Endothelial cell of umbilical vein (primary cell): ENCODE measurements at regions of chrX and their contacts with region 1.

Region 1: GRCh38 chrX:56618323-56618722 is 54.9 kb downstream of the UBQLN2 start:
- DNase-seq: no peak
- H3K4me3 ChIP-seq: no peak overlapping the region
- H3K27ac ChIP-seq: no peak overlapping the region
- H3K4me1 ChIP-seq: no peaks in the 10 kb centered on the region
- H3K27me3 ChIP-seq: no peaks in the 10 kb centered on the region
- CTCF ChIP-seq: no peak
- POLR2A ChIP-seq: no peak

Region 2: DNA sequence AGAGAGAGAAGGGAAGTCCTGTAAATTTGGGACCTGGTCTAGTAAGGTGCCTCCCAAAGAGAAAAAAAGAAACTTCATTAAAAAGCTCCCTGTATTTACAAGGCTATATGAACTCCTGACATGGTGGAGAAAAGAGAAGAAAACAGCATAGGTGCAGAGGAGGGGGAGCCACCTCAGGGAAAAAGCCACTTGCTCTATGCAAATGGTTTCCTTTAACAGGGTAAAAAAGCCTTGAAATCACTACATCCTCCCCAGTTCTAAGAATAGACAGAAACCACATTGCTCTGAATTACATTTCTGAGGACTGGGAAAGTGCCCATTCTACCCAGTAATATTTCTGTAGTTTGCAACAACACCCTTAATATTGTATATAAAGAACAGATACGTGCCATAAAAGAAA is 220.7 kb before region 1 on chrX:
- CTCF ChIA-PET with region 1: no interaction called
- POLR2A ChIA-PET with region 1: no interaction called
- dilution Hi-C with region 1: no loop called
- intact Hi-C with region 1: no loop called
- DNase-seq: no peak
- H3K4me3 ChIP-seq: no peak overlapping the region
- H3K27ac ChIP-seq: no peak overlapping the region
- H3K4me1 ChIP-seq: no peaks in the 10 kb centered on the region
- H3K27me3 ChIP-seq: no peaks in the 10 kb centered on the region
- CTCF ChIP-seq: no peak
- POLR2A ChIP-seq: no peak

Region 3: GRCh38 chrX:56462389-56462788 is 155.9 kb before region 1 on chrX:
- CTCF ChIA-PET with region 1: no interaction called
- POLR2A ChIA-PET with region 1: no interaction called
- dilution Hi-C with region 1: no loop called
- intact Hi-C with region 1: no loop called
- DNase-seq: no peak
- H3K4me3 ChIP-seq: no peak overlapping the region
- H3K27ac ChIP-seq: no peak overlapping the region
- H3K4me1 ChIP-seq: no peaks in the 10 kb centered on the region
- H3K27me3 ChIP-seq: no peaks in the 10 kb centered on the region
- CTCF ChIP-seq: no peak
- POLR2A ChIP-seq: no peak

Region 4: DNA sequence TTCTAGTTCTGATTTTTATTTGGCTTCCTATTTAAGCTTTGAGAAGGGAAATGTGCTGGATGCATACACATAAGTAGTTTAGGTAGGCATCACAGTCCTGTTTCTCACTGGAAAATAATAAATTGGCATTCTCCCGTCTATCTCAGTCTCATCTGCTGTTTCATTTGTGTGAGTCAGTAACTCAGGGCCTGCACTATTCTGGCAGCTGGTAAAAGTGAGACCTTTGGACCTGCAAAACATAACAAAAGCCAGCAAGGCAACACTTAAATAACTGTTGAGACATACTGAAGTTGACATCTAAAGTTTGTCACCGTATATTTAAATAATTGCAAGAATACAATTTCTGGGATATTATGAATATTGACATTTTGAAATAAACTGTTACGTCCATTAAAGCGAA is 63.5 kb before region 1 on chrX:
- CTCF ChIA-PET with region 1: no interaction called
- POLR2A ChIA-PET with region 1: no interaction called
- dilution Hi-C with region 1: no loop called
- intact Hi-C with region 1: loop called (anchors 2 kb)
- DNase-seq: no peak
- H3K4me3 ChIP-seq: no peak overlapping the region
- H3K27ac ChIP-seq: no peak overlapping the region
- H3K4me1 ChIP-seq: no peaks in the 10 kb centered on the region
- H3K27me3 ChIP-seq: no peaks in the 10 kb centered on the region
- CTCF ChIP-seq: no peak
- POLR2A ChIP-seq: no peak

Region 5: DNA sequence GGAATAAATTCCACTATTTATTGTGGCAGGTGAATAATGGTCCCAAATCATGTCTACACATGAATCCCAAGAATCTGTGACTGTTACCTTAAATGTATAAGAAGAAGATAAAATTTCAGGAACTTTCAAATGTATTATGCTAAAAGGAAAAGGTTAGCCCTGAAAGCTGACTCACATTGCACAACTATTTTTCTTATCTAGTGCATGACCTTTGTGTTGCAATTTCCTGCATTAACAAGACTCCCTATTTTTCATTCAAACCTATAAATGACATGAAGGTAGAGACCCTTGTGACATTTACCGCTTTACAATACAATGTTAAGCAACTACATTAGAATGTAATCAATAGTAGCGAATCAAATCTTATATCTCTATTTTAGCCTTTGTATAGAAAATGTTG is 18.2 kb before region 1 on chrX:
- CTCF ChIA-PET with region 1: no interaction called
- POLR2A ChIA-PET with region 1: no interaction called
- dilution Hi-C with region 1: no loop called
- intact Hi-C with region 1: no loop called
- DNase-seq: peak; percentile 15
- H3K4me3 ChIP-seq: no peak overlapping the region
- H3K27ac ChIP-seq: no peak overlapping the region
- H3K4me1 ChIP-seq: no peaks in the 10 kb centered on the region
- H3K27me3 ChIP-seq: no peaks in the 10 kb centered on the region
- CTCF ChIP-seq: no peak
- POLR2A ChIP-seq: no peak

Region 6: GRCh38 chrX:56853436-56853835 is 235.1 kb after region 1 on chrX:
- CTCF ChIA-PET with region 1: no interaction called
- POLR2A ChIA-PET with region 1: no interaction called
- dilution Hi-C with region 1: no loop called
- intact Hi-C with region 1: no loop called
- DNase-seq: no peak
- H3K4me3 ChIP-seq: no peak overlapping the region
- H3K27ac ChIP-seq: no peak overlapping the region
- H3K4me1 ChIP-seq: no peaks in the 10 kb centered on the region
- H3K27me3 ChIP-seq: no peaks in the 10 kb centered on the region
- CTCF ChIP-seq: no peak
- POLR2A ChIP-seq: no peak